HEK293 (cell line): ENCODE measurements at regions of chr12 and their contacts with region 1.

Region 1: DNA sequence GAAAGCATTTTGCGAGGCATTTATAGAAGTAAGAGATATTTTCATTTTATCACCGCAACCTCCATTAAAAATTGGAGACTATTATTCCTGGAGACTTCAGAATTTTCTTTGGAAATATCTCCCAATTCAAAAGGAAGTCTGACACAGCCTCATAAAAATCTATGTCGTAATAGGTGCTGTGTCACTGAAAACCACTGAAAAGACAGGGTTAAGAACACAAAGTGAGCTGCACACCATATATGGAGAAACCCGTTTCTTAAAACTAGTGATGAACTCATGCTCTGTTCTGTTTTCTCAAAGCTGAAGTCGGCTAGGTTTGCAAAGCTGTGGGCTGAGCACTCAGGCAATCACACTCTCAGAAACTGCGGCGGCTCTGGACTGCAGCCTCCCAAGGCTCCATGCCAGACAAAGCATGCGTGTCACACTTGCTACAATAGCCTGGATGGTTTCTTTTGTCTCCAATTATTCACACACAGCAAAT is at the start of gene GLIPR1:
- H3K4me3 ChIP-seq: peak within 1 kb of the TSS; percentile 13
- H3K27ac ChIP-seq: no peak within 1 kb of the TSS
- H3K4me1 ChIP-seq: 0 out of 2 replicates have a peak, but pooled peaks cover 5% of the 10 kb centered on the region
- CTCF ChIP-seq: no peak

Region 2: GRCh38 chr12:75334384-75335030 is 146.0 kb before region 1 on chr12 and contains the start of gene GLIPR1L1:
- CTCF ChIA-PET with region 1: interaction called, 10 read pairs
- POLR2A ChIA-PET with region 1: no interaction called
- H3K4me3 ChIP-seq: peak within 1 kb of the TSS; percentile 19
- H3K27ac ChIP-seq: no peak within 1 kb of the TSS
- H3K4me1 ChIP-seq: no peaks in the 10 kb centered on the region
- CTCF ChIP-seq: peak; percentile 94

Region 3: DNA sequence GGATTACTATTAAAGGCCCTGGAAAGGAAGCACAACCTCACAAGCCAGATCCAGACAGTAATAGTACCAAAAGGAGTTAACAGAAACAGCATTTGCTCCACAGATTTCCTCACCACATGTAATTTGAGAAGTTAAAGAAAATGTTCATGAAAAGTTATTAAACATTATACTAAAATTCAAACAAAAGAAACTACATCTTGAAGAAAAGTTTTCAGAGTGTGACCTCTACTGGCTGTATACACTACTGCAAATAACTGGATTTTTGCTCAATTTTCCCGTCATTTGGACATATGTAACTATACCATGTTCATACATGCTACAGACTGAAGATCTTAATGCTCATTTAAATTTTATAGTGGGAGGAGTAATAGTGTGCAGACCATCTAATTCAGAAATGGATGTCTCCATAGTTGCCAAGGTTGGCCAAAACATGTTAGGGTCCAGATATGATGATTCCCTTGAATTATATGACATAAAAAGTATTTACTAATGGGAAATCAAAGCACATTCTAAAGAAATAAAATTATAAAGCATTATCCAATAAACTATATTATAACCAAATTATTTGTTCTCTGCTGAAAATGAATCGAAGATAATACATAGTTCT is 25.3 kb after region 1 on chr12:
- CTCF ChIA-PET with region 1: interaction called, 15 read pairs
- POLR2A ChIA-PET with region 1: no interaction called
- H3K4me3 ChIP-seq: no peak overlapping the region
- H3K27ac ChIP-seq: no peak overlapping the region
- H3K4me1 ChIP-seq: 0 out of 2 replicates have a peak, but pooled peaks cover 2% of the 10 kb centered on the region
- CTCF ChIP-seq: no peak

Region 4: DNA sequence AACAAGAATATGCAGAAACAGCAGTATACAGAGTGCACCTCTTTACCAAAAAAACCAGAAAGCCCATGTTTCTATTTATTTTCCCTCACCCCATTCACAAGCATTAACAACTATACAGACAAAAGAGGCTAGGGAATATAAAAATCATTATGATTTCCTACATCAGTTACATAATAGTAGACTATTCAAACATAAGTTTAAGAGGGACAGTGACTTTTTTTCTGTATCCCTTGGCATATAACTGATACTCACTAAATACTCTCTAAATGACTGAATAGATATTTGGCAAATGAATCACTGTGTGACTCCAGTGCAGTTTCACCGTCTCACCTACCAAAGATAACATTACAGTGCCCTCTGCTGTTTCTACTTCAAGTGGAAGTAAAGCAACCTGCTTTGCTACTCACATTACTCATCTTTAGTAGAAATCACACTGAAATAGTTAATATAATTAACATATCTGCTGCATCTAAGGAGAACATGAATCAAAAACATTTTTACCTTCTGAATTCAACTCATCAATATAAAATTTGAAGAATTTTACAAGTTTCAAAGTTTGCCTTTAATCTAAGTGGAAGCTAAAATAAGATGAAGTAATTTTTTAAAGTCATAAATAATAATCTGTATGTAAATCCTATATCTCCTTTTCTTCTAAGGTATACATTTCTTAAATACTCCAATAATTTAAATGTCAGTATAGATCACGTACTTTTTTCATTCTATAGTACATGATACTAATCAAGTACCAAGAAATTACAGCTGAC is 975.3 kb after region 1 on chr12:
- CTCF ChIA-PET with region 1: interaction called, 21 read pairs
- POLR2A ChIA-PET with region 1: no interaction called
- H3K4me3 ChIP-seq: no peak overlapping the region
- H3K27ac ChIP-seq: no peak overlapping the region
- H3K4me1 ChIP-seq: 0 out of 2 replicates have a peak, but pooled peaks cover 3% of the 10 kb centered on the region
- CTCF ChIP-seq: 0 out of 2 replicates have a peak, but pooled peaks have one; percentile 26

Region 5: GRCh38 chr12:76586764-76587395 is 1106.4 kb after region 1 on chr12:
- CTCF ChIA-PET with region 1: interaction called, 11 read pairs
- POLR2A ChIA-PET with region 1: no interaction called
- H3K4me3 ChIP-seq: no peak overlapping the region
- H3K27ac ChIP-seq: no peak overlapping the region
- H3K4me1 ChIP-seq: no peaks in the 10 kb centered on the region
- CTCF ChIP-seq: peak; percentile 23; the same call in 1 of the 2 replicates